ENCODE measurements at regions of chr2 and their contacts with region 1.

Region 1: DNA sequence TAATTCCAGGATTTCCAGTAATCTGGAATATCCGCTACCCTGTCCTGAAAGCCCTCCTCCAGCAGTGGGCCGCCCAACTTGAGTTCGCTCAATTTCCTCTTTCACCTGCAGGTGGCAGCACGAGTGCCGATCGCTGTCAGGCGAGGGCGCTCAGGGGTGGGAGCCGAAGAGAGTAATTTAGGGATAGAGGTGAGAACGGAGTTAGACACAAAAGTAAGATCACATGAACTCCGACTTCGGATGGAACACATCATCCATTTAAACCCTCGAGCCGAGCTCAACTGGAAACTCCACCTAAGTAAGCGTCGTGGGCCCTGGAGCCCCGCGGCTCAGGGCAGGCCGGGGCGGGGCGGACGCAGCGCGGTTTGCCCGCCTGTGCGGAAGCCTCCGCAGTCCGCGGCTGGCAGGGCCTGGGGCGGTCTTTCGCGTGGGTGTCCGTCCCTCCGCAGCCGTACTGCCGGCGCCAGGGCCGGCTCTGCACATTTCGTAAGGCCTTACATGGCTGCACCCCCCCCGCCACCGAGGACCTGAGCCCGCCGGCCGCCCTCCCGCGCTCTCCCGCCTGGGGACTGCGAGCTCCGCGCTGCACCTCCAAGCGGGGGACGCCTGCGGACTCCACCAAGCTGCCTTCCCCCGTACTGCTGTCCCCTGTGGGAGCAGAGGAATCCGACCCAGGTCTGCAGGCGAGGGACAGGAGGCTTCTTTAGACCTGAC is 61.2 kb downstream of the SEMA4F start:
- H3K4me3 Mint-ChIP-seq: peak overlapping the region; percentile 75
- H3K27ac Mint-ChIP-seq: no peak overlapping the region
- H3K4me1 Mint-ChIP-seq: peaks cover 5% of the 10 kb centered on the region
- H3K27me3 Mint-ChIP-seq: peaks cover 7% of the 10 kb centered on the region

Region 2: DNA sequence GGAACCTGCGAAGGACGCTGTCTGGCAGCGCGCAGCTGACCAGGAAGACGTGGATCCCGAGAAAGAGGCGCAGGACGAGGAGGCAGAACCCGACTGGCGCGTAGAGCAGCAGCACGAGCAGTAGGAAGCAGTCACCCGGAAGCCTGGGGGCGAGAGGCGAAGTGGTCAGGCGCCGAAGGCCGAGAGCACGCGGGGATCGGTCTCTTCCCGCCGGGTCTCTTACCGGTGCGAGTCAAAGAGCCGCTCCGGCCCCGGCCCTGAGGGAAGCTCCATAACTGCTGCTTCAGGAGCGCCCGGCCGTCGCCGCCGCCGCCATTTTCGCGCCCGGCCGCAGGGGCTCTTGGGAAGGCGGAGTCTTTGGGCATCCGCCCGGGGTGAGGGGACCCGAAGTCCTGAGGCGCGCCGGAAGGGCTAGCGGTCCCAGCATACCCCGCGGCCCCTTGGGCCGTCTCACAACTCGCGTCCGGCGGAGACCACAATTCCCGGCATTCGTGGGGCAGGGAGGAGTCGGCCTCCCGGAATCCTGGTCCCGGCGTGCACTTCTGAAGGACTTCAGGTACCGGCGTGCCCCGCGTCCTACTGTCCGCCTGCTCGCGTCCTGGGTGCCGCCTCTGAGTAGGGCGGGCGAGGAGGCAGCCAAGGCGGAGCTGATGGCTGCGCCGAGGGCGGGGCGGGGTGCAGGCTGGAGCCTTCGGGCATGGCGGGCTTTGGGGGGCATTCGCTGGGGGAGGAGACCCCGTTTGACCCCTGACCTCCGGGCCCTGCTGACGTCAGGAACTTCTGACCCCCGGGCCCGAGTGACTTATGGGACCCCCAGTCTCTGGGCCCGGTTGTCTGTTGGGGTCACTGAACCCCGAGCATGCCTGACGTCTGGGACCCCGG is 185.6 kb before region 1 on chr2 and contains the starts of genes AUP1 and HTRA2:
- intact Hi-C with region 1: no loop called
- H3K4me3 Mint-ChIP-seq: peak within 1 kb of the TSS; percentile 99
- H3K27ac Mint-ChIP-seq: peak within 1 kb of the TSS; percentile 97
- H3K4me1 Mint-ChIP-seq: peaks cover 48% of the 10 kb centered on the region
- H3K27me3 Mint-ChIP-seq: no peaks in the 10 kb centered on the region

Region 3: DNA sequence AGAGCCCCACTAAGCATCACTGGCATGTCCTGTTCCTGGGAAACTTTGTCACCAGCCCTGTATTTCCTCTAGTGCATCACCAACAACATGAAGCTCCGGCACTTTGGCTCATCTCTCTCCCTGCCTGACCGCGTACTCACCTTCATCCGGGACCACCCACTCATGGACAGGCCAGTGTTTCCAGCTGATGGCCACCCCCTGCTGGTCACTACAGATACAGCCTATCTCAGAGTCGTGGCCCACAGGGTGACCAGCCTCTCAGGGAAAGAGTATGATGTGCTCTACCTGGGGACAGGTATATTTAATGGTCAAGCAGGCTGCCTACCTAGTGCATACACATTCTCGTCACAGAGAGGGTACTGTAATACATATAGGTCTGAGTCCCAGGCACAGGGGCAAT is 40.1 kb before region 1 on chr2:
- intact Hi-C with region 1: no loop called
- H3K4me3 Mint-ChIP-seq: no peak overlapping the region
- H3K27ac Mint-ChIP-seq: no peak overlapping the region
- H3K4me1 Mint-ChIP-seq: peaks cover 7% of the 10 kb centered on the region
- H3K27me3 Mint-ChIP-seq: peaks cover 5% of the 10 kb centered on the region

Region 4: DNA sequence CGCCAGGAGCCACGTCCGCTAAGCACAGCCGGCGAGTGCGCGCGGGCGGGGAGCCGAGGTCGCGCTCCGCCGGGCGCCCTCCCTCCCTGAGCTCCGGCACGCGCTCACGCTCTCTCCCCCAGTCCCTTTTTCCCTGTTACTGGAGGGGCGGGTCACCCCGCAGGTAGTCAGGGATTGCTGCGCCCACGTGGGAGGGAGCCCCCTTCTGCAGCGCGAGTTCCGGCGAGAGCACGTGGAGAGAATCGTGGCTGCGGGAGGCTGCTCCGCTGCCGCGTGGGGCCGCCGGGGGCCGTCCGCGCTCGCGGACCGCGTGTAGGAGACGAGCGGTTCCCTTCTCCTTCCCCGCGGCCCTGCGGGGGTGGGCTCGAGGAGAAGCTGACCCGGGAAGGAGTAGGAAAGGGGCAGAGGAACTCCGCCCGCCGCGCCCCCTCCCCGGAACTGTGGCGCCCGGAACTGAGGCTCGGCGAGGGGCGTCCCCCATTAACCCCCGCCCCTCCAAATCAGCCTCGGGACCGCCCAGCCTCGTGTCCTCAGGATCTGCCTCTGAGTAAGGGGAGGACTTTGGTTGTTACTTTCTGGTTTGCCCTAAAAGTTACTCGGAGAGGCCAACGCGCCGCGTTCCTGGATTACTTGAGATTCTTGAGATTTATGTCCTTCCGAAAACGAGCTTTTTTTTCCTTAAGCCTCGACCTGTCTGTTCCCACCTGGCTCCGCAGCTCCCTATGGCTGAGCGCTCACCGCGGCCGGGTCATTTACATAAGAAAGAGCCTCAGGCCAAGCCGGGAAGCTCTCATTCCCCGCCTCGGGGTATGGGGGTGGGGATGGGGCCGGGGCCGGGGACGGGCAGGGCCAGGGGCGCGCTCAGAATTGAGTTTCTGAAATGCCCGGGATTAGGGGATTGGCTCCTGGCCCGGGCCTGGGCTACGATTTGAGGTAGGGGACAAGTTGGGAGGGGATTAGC is 119.8 kb after region 1 on chr2:
- intact Hi-C with region 1: loop called (anchors 1 kb)
- H3K4me3 Mint-ChIP-seq: peak overlapping the region; percentile 91
- H3K27ac Mint-ChIP-seq: peak overlapping the region; percentile 89
- H3K4me1 Mint-ChIP-seq: peaks cover 69% of the 10 kb centered on the region
- H3K27me3 Mint-ChIP-seq: no peaks in the 10 kb centered on the region

Region 5: DNA sequence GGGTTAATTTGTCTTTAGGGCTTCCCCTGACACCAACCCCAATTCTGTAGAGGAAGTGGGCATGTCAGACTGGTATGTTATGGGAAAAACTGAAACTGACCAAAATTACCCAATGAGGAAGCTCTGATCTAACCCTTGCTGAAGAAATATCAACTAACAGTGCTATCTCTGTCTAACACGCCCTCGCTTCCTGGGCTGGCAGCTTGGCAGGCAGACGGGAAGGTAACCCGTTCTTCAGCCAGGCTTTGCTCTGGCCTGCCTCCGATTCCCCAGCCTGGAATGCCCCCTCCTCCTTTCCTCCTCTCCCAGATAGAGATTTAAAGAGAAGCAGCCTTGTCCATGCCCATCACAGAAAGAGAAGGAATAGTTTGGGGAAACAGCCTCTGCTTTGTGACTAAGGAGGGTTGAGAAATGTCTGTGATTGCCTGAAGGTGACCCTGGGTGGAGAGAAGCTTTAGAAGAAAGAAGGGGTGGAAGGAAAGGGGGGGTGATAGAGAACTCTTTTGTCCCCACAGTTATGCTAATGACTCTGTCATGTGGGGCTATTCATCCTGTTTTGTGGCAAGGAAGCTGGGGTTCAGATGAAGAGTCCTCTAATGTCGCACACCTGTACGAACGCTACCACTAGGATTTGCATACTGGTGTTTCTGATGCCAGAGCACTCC is 134.1 kb after region 1 on chr2:
- intact Hi-C with region 1: loop called (anchors 1 kb)
- H3K4me3 Mint-ChIP-seq: peak overlapping the region; percentile 69
- H3K27ac Mint-ChIP-seq: peak overlapping the region; percentile 87
- H3K4me1 Mint-ChIP-seq: peaks cover 87% of the 10 kb centered on the region
- H3K27me3 Mint-ChIP-seq: no peaks in the 10 kb centered on the region

Measured in dendritic cell treated with granulocyte-macrophage colony-stimulating factor and Interleukin-4, amounts not matched to agents 40 ng/mL and 50 ng/mL, for 4 days (primary cell).